Psoas muscle (tissue), 8 donors: ENCODE measurements at regions of chr19 and their contacts with region 1.

Region 1: DNA sequence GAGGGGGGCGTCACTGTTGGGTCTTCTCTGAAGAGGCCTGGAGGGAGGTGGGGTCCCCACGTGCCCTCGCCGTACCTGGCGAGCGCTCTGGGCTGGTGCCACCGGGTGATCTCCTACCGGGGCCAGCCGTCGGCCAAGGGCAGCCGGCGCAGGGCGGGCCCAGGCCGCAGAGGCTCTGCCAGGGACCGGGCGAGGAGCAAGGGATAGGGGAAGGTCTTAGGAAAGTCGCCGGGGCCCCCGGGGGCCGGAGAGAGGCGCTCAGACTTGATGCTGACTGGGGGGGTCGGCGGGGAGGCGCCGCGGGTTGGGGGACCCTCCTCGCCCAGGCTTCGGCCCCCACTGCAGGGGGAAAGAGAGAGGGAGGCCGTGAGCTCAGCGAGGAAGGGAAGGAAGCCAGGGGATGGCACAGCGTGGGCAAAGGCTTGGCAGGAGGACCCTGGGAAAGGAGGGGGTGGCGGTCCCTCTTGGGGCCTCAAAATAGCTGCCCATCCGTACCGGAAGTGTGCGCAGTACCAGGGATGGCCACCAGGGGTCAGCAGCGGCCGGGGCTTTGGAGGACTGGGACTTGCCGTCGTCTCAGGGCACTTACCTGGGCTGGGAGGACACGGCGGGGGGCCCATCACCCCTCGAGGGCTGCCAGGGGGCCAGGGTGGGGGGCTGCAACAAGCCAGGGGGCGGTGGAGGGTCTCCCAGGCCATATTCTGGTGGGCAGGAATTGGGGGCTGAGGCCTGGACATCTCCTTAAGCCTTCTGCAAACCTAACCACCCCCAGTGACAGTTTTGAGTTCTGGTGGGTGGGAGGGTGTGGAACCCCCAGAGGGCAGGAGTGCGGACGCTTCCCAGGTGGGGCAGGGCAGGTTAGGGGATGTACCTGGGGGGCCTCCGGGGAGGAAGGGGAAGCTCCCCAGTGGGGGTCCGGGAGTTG is 7.7 kb upstream of the TMEM161A start:
- DNase-seq: peak; percentile 83 to 90
- ATAC-seq: peak; percentile 84 to 92 (median 90)
- H3K4me3 ChIP-seq: peak overlapping the region; percentile 46
- H3K27ac ChIP-seq: no peak overlapping the region
- H3K4me1 ChIP-seq: no peaks in the 10 kb centered on the region
- H3K27me3 ChIP-seq: no peaks in the 10 kb centered on the region
- CTCF ChIP-seq: peak; percentile 92

Region 2: DNA sequence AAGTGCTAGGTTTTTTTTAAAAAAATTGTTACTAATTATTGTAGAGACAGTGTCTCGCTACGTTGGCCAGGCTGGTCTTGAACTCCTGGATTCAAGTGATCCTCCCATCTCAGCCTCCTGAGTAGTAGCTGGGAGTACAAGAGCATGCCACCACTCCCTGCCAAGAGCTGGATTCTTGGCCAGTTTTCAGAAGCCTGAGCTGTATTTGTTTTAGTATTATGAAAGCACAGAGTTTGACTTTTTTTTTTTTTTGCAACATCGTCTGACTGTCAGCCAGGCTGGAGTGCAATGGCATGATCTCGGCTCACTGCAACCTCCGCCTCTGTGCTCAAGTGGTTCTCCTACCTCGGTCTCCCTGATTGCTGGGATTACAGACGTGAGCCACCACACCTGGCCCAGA is 105.5 kb before region 1 on chr19:
- intact Hi-C with region 1: no loop called
- DNase-seq: peak; percentile 71 to 78
- ATAC-seq: peak in 3 of 4 donors; percentile 55 to 70 (median 57)
- H3K4me3 ChIP-seq: no peak overlapping the region
- H3K27ac ChIP-seq: no peak overlapping the region
- H3K4me1 ChIP-seq: peaks cover 15% of the 10 kb centered on the region
- H3K27me3 ChIP-seq: no peaks in the 10 kb centered on the region
- CTCF ChIP-seq: no peak

Region 3: DNA sequence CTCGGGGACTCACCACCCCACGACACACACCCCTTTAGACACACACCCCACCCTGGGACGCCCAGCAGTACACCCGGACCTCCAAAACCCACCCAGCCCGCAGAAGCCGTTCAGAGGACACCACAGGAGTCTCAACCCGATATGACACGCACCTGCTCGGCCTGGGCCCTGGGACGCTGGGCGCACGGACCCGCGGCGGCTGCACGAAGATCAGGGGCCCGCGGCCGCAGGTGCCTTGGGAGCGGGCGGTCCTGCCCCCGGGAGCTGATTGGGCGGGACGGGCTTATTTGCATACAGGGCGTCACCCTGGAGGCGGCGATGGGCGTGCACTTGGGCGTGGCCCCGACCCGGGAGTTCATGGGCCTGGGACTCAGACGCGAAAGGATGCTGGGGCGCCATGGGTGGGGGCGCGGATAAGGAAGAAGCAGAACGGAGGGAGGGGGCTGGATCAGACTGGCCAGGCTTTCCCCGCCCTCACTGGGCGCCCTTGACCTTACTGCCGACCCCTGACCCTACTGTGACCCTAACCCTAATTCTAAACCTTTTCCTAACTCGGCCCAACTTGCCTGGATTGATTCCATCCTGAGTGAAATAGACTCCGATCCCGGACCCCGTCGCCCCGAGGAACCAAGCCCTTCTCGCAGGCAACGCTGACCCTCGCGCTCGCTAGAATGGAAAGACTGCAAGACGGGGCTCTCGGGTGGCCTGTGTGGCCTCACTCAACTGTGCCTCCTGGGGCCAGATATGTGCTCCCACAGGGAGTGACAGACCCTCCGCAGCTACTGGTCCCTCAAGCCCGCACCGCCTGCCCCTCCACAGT is 24.3 kb after region 1 on chr19 and contains the start of gene MEF2B:
- intact Hi-C with region 1: loop called (anchors 1 to 2 kb)
- DNase-seq: peak; percentile 82 to 89
- ATAC-seq: peak; percentile 89 to 93 (median 90)
- H3K4me3 ChIP-seq: peak within 1 kb of the TSS; percentile 60
- H3K27ac ChIP-seq: no peak within 1 kb of the TSS
- H3K4me1 ChIP-seq: peaks cover 19% of the 10 kb centered on the region
- H3K27me3 ChIP-seq: no peaks in the 10 kb centered on the region
- CTCF ChIP-seq: no peak
- total RNA-seq, gene MEF2B: 0.56 to 0.91 (median 0.63) TPM

Region 4: GRCh38 chr19:19192078-19192882 is 46.3 kb after region 1 on chr19 and contains the starts of genes BORCS8 and RFXANK:
- intact Hi-C with region 1: no loop called
- DNase-seq: peak; percentile 99
- ATAC-seq: peak; percentile 93 to 96 (median 96)
- H3K4me3 ChIP-seq: peak within 1 kb of the TSS; percentile 84
- H3K27ac ChIP-seq: peak within 1 kb of the TSS; percentile 98
- H3K4me1 ChIP-seq: peaks cover 36% of the 10 kb centered on the region
- H3K27me3 ChIP-seq: no peaks in the 10 kb centered on the region
- CTCF ChIP-seq: no peak
- total RNA-seq, gene BORCS8: 16.0 to 33.6 (median 21.0) TPM
- total RNA-seq, gene RFXANK: 33.3 to 53.5 (median 46.2) TPM

Region 5: GRCh38 chr19:19280561-19280960 is 134.6 kb after region 1 on chr19:
- intact Hi-C with region 1: no loop called
- DNase-seq: no peak
- ATAC-seq: peak; percentile 72 to 89 (median 81)
- H3K4me3 ChIP-seq: no peak overlapping the region
- H3K27ac ChIP-seq: no peak overlapping the region
- H3K4me1 ChIP-seq: no peaks in the 10 kb centered on the region
- H3K27me3 ChIP-seq: no peaks in the 10 kb centered on the region
- CTCF ChIP-seq: no peak

Region 6: DNA sequence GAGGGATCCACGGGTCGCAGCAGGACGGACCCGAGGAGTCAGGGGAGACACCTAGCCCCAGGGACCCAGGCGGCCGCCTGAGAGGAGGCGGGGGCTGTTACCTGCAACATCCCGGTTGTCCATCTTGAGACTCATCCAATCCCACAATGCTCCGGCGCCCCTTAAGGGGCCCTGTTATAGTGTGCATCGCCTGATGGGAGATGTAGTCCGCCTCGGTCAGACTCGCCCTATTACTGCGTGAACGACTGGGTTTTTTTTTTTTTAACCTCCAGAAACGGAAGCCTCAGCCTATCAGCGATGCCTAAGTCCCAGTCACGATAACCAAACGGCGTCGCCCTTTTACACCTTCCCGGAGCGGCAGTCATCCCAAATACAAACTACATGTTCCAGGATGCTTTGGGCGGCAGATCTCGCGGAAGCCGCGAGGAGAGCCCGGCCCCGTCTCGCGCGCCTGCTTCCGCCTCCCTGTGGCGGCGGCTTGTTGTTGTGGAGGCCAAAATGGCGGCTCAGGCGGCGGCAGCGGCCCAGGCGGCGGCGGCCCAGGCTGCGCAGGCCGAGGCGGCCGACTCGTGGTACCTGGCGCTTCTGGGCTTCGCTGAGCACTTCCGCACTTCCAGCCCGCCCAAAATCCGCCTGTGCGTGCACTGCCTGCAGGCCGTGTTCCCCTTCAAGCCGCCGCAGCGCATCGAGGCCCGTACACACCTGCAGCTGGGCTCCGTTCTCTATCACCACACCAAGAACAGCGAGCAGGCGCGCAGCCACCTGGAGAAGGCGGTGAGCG is 174.6 kb after region 1 on chr19 and contains the starts of genes MAU2 and SUGP1:
- intact Hi-C with region 1: no loop called
- DNase-seq: peak; percentile 88 to 94
- ATAC-seq: peak; percentile 90 to 93 (median 91)
- H3K4me3 ChIP-seq: peak within 1 kb of the TSS; percentile 93
- H3K27ac ChIP-seq: peak within 1 kb of the TSS; percentile 95
- H3K4me1 ChIP-seq: peaks cover 47% of the 10 kb centered on the region
- H3K27me3 ChIP-seq: no peaks in the 10 kb centered on the region
- CTCF ChIP-seq: peak; percentile 48
- total RNA-seq, gene MAU2: 26.2 to 55.1 (median 40.1) TPM
- total RNA-seq, gene SUGP1: 25.8 to 35.8 (median 29.0) TPM

Region 7: GRCh38 chr19:19342756-19343322 is 196.9 kb after region 1 on chr19:
- intact Hi-C with region 1: loop called in 1 of 2 experiments (anchors 1 kb)
- DNase-seq: peak; percentile 70 to 81
- ATAC-seq: peak; percentile 74 to 87 (median 84)
- H3K4me3 ChIP-seq: no peak overlapping the region
- H3K27ac ChIP-seq: no peak overlapping the region
- H3K4me1 ChIP-seq: no peaks in the 10 kb centered on the region
- H3K27me3 ChIP-seq: no peaks in the 10 kb centered on the region
- CTCF ChIP-seq: peak; percentile 81